Activated CD8-positive, alpha-beta T cell treated with anti-CD3 and anti-CD28 coated beads for 36 hours (primary cell): ENCODE measurements at regions of chr2 and their contacts with region 1.

Region 1: DNA sequence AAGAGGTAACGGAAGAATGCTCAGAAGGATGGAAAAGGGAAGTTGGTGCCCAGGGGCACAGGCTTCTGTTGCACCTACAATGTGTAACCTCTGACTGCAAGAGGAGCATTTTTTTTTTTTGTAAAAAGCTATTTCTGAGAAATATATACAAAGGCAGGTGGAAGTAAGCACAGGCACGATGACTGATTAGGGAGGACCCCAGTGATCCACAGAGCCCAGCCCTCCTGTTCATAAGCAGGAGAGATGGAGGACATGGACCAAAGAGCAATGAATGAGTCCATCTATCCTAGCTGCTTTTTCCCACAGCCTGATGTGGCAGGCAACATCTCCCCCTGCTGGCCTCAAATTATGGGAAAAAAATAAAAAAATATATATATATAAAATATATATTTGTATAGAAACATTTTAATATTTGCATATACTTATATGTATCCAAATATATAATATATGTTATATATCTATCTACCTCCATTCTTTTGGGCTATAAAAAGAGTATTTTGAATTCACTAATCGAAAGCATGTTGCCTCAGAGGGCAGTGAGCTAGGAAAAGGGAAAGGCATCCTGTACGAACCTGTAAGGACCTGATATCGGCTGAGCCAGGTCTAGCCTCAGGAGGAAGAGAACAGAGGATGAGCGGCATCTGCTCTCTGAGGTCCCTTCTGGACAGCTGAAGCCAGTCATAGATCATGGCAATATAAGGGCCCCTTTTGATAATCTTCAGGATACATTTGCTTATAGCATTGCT is 166.0 kb upstream of the STK17B start:
- DNase-seq: peak; percentile 16
- ATAC-seq: peak; percentile 24
- H3K4me3 Mint-ChIP-seq: no peak overlapping the region
- H3K27ac Mint-ChIP-seq: no peak overlapping the region
- H3K4me1 Mint-ChIP-seq: peaks cover 8% of the 10 kb centered on the region
- H3K27me3 Mint-ChIP-seq: no peaks in the 10 kb centered on the region
- CTCF ChIP-seq: peak; percentile 75

Region 2: GRCh38 chr2:196131384-196131937 is 205.9 kb before region 1 on chr2:
- CTCF ChIA-PET with region 1: interaction called, 12 read pairs
- POLR2A ChIA-PET with region 1: no interaction called
- intact Hi-C with region 1: no loop called
- DNase-seq: peak; percentile 83
- ATAC-seq: peak; percentile 51
- H3K4me3 Mint-ChIP-seq: no peak overlapping the region
- H3K27ac Mint-ChIP-seq: peak overlapping the region; percentile 79
- H3K4me1 Mint-ChIP-seq: peaks cover 13% of the 10 kb centered on the region
- H3K27me3 Mint-ChIP-seq: no peaks in the 10 kb centered on the region
- CTCF ChIP-seq: peak; percentile 72